GM12878 (cell line): ENCODE measurements at regions of chrX and their contacts with region 1.

Region 1: DNA sequence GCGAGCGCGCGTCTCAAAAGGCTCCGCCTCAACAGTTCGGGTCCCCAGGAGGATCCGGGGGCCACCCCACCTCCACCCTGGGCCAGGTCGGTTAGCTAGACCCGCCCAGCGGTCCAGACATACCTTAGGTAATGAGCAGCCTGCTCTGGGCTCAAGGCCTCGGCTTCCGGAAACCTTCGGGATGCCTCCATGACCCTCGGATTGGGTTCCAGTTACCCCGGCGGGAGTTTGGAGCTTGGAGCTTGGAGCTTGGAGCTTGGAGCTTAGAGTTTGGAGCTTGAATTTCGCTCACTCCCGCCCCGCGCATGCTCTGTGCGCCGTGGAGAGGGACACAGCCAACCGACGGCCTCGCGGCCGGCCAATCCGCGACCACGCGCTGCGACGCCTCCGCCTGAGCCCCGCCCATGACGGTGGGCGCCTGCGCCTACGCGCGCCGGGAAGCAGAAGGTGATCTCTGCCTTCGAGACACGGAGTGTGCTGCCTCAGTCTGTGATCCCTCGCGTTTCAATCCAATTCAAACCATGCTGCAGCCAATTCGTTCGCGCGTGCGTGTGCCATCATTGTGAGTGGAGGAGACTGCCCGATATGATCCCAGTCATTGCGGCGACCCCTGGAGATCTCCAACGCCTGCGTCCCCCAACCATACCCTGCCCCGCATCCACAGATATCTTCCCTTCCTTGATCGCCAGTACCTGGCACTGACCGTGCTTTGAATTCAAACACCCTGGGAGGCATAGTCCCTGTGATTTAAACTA is at the start of gene ERCC6L:
- DNase-seq: peak; percentile 51
- ATAC-seq: peak; percentile 99
- H3K4me3 ChIP-seq: peak within 1 kb of the TSS; percentile 84
- H3K27ac ChIP-seq: no peak within 1 kb of the TSS
- H3K4me1 ChIP-seq: no peaks in the 10 kb centered on the region
- H3K27me3 ChIP-seq: no peaks in the 10 kb centered on the region
- CTCF ChIP-seq: no peak
- EP300 ChIP-seq: no peak
- POLR2A ChIP-seq: peak; percentile 91
- RAD21 ChIP-seq: no peak
- polyA plus RNA-seq, gene ERCC6L: 4.7 to 5.6 TPM

Region 2: GRCh38 chrX:72080150-72080549 is 158.7 kb before region 1 on chrX:
- CTCF ChIA-PET with region 1: no interaction called
- POLR2A ChIA-PET with region 1: no interaction called
- RAD21 ChIA-PET with region 1: no interaction called
- SMC1A ChIA-PET with region 1: no interaction called
- in situ Hi-C with region 1: no loop called
- intact Hi-C with region 1: no loop called
- DNase-seq: no peak
- ATAC-seq: no peak
- H3K4me3 ChIP-seq: no peak overlapping the region
- H3K27ac ChIP-seq: no peak overlapping the region
- H3K4me1 ChIP-seq: no peaks in the 10 kb centered on the region
- H3K27me3 ChIP-seq: peaks cover 0 to 2% of the 10 kb centered on the region in 2 experiments; a peak in 1 of 4 replicates
- CTCF ChIP-seq: no peak
- EP300 ChIP-seq: no peak
- POLR2A ChIP-seq: no peak
- RAD21 ChIP-seq: no peak

Region 3: GRCh38 chrX:72276478-72276953 is 37.6 kb after region 1 on chrX:
- CTCF ChIA-PET with region 1: interaction called, 13 read pairs
- POLR2A ChIA-PET with region 1: no interaction called
- RAD21 ChIA-PET with region 1: interaction called, 3 read pairs
- SMC1A ChIA-PET with region 1: interaction called, 3 read pairs
- in situ Hi-C with region 1: no loop called
- intact Hi-C with region 1: no loop called
- DNase-seq: no peak
- ATAC-seq: peak; percentile 25
- H3K4me3 ChIP-seq: peak overlapping the region; percentile 83
- H3K27ac ChIP-seq: peak overlapping the region; percentile 94
- H3K4me1 ChIP-seq: peaks cover 4% of the 10 kb centered on the region; the same call in 1 of the 2 replicates
- H3K27me3 ChIP-seq: peaks cover 0 to 2% of the 10 kb centered on the region in 2 experiments; a peak in 2 of 4 replicates
- CTCF ChIP-seq: no peak
- EP300 ChIP-seq: no peak
- POLR2A ChIP-seq: no peak
- RAD21 ChIP-seq: no peak

Region 4: DNA sequence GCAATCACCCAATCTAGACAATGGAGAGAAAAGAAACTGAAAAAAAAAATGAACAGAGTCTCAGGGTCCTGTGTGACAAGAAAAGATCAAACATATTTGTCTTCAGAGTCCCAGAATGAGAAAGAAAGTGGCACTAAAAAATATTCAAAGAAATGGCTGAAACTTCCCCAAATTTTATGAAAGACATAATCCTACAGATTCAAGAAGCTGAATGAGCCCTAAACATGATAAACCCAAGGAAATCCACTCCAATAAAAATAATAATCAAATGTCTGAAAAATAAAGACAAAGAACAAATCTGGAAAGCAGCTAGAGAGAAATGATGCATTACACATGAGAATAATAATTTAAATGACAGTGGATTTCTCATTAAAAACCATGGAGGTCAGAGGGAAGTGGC is 197.1 kb after region 1 on chrX:
- CTCF ChIA-PET with region 1: no interaction called
- POLR2A ChIA-PET with region 1: no interaction called
- RAD21 ChIA-PET with region 1: no interaction called
- SMC1A ChIA-PET with region 1: no interaction called
- in situ Hi-C with region 1: no loop called
- intact Hi-C with region 1: no loop called
- DNase-seq: no peak
- ATAC-seq: no peak
- H3K4me3 ChIP-seq: no peak overlapping the region
- H3K27ac ChIP-seq: no peak overlapping the region
- H3K4me1 ChIP-seq: no peaks in the 10 kb centered on the region
- H3K27me3 ChIP-seq: no peaks in the 10 kb centered on the region
- CTCF ChIP-seq: no peak
- EP300 ChIP-seq: no peak
- POLR2A ChIP-seq: no peak
- RAD21 ChIP-seq: no peak

Region 5: DNA sequence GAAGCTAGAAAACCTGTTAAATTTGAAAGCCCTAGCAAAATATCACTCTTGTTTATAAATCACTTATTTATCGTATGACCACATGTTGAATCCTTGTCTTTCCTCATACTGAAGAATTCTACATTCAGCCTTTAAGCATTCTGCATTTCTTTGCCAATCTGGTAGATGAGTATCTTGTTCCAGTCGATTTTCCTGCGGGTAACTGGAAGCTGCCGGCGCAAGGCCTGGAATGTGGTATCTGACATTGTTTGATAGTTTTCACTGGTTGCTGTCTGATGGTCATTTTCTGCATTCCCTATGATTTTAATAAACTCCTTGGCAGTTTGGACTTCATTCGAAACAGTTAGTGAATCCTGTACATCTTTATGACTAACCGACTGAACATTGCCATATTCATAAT is 488.9 kb after region 1 on chrX:
- CTCF ChIA-PET with region 1: no interaction called
- POLR2A ChIA-PET with region 1: no interaction called
- RAD21 ChIA-PET with region 1: no interaction called
- SMC1A ChIA-PET with region 1: no interaction called
- in situ Hi-C with region 1: no loop called
- intact Hi-C with region 1: no loop called
- DNase-seq: no peak
- ATAC-seq: no peak
- H3K4me3 ChIP-seq: no peak overlapping the region
- H3K27ac ChIP-seq: no peak overlapping the region
- H3K4me1 ChIP-seq: no peaks in the 10 kb centered on the region
- H3K27me3 ChIP-seq: no peaks in the 10 kb centered on the region
- CTCF ChIP-seq: no peak
- EP300 ChIP-seq: no peak
- POLR2A ChIP-seq: no peak
- RAD21 ChIP-seq: no peak

Region 6: DNA sequence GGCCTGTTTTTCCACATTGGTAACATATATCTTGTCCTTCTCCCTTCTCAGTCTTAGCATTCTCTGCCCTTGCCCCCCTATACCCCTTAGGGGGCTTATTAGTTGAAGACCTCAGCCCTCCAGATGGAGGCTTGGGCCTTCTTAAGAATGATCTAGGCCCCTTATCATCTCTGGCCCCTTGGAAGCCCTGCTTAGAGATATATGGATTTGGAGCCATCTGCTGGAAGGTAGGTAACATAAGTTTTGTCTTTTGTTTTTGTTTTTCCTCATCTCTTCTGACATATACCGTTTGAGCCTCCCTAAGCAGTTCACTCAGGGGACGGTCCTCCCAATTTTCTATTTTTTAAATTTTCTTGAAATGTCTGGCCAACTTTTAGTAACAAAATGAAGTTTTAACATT is 1024.1 kb after region 1 on chrX:
- CTCF ChIA-PET with region 1: no interaction called
- POLR2A ChIA-PET with region 1: no interaction called
- RAD21 ChIA-PET with region 1: no interaction called
- SMC1A ChIA-PET with region 1: no interaction called
- in situ Hi-C with region 1: loop called (anchors 25 kb)
- intact Hi-C with region 1: no loop called
- DNase-seq: no peak
- ATAC-seq: no peak; the same call in 2 of the 3 replicates
- H3K4me3 ChIP-seq: no peak overlapping the region
- H3K27ac ChIP-seq: no peak overlapping the region
- H3K4me1 ChIP-seq: no peaks in the 10 kb centered on the region
- H3K27me3 ChIP-seq: no peaks in the 10 kb centered on the region
- CTCF ChIP-seq: peak; percentile 7 to 16 (median 14); a peak in 2 of 6 replicates
- EP300 ChIP-seq: no peak
- POLR2A ChIP-seq: no peak
- RAD21 ChIP-seq: peak; percentile 51; the same call in 1 of the 2 replicates

Region 7: DNA sequence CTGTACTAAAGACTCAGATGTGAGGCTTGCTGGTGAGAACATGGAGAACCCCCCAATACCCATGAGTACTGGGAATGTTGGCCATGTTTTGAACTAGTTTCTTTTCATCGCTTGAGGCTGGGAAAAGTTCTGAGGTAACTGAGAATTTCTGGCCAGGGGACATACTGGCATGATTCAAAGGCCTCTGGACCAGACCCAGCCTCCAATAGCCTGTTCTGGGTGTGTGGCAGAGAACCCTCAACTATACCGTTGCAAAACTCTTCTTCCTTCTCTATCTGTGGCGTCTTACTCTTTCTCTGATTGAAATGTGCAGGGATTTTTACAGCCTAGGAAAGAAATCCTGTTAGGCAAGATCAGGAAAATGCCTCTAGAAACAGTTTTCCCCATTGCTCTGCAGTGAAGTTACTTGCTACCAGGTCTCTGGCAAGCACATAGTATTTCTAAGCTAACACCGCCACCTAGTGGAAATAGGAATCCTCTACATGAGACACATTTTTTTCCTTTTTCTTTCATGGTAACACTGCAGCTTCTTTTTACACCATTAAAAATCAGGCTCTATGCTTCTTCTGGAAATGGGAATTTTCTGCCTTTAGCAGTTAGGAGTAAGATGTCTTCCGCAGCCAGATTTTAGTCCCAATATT is 1894.4 kb after region 1 on chrX:
- CTCF ChIA-PET with region 1: no interaction called
- POLR2A ChIA-PET with region 1: no interaction called
- RAD21 ChIA-PET with region 1: no interaction called
- SMC1A ChIA-PET with region 1: no interaction called
- in situ Hi-C with region 1: loop called (anchors 25 kb)
- intact Hi-C with region 1: no loop called
- DNase-seq: peak; percentile 19
- ATAC-seq: peak; percentile 93
- H3K4me3 ChIP-seq: no peak overlapping the region
- H3K27ac ChIP-seq: no peak overlapping the region
- H3K4me1 ChIP-seq: no peaks in the 10 kb centered on the region
- H3K27me3 ChIP-seq: no peaks in the 10 kb centered on the region
- CTCF ChIP-seq: peak; percentile 71 to 80 (median 73)
- EP300 ChIP-seq: no peak
- POLR2A ChIP-seq: no peak
- RAD21 ChIP-seq: peak; percentile 93